Dorsolateral prefrontal cortex (tissue), 120 donors: ENCODE measurements at regions of chr4 and their contacts with region 1.

Region 1: GRCh38 chr4:185142912-185143595 is at the start of gene SLC25A4:
- DNase-seq: peak; percentile 82 to 96 (median 90)
- H3K4me3 ChIP-seq: peak within 1 kb of the TSS; percentile 64 to 96 (median 81)
- H3K27ac ChIP-seq: peak within 1 kb of the TSS; percentile 82 to 99 (median 96)
- H3K27me3 ChIP-seq: no peaks in the 10 kb centered on the region
- CTCF ChIP-seq: peak; percentile 12 to 77 (median 60)
- total RNA-seq, gene SLC25A4: 57.5 to 171 (median 125) TPM

Region 2: GRCh38 chr4:184649026-184649970 is 493.8 kb before region 1 on chr4 and contains the starts of genes CASP3 and PRIMPOL:
- intact Hi-C with region 1: loop called in 1 of 2 experiments (anchors 10 kb)
- DNase-seq: peak; percentile 93 to 99 (median 96)
- H3K4me3 ChIP-seq: peak within 1 kb of the TSS; percentile 60 to 97 (median 89)
- H3K27ac ChIP-seq: peak within 1 kb of the TSS; percentile 55 to 98 (median 94)
- H3K27me3 ChIP-seq: no peaks in the 10 kb centered on the region
- CTCF ChIP-seq: peak in 51 of 56 donors; percentile 14 to 67 (median 44)
- total RNA-seq, gene CASP3: 6.4 to 17.2 (median 12.2) TPM
- total RNA-seq, gene PRIMPOL: 9.5 to 30.5 (median 17.5) TPM

Region 3: DNA sequence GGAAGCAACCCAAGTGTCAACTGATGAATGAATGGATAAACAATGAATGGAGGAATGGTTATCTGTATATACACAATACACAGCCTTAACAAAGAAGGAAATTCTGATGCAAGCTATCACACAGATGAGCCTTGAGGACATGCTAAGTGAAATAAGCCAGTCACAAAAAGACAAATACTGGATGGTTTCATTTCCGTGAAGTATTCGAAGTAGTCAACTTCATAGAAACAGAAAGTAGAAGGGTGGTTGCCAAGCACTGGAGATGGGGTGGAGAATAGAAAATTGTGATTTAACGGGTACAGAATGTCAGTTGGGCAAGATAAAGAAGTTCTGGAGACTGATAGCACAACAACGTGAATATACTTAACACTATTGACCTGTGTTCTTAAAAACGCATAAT is 437.4 kb before region 1 on chr4:
- intact Hi-C with region 1: no loop called
- DNase-seq: no peak
- H3K4me3 ChIP-seq: no peak overlapping the region
- H3K27ac ChIP-seq: no peak overlapping the region
- H3K27me3 ChIP-seq: no peaks in the 10 kb centered on the region
- CTCF ChIP-seq: no peak

Region 4: DNA sequence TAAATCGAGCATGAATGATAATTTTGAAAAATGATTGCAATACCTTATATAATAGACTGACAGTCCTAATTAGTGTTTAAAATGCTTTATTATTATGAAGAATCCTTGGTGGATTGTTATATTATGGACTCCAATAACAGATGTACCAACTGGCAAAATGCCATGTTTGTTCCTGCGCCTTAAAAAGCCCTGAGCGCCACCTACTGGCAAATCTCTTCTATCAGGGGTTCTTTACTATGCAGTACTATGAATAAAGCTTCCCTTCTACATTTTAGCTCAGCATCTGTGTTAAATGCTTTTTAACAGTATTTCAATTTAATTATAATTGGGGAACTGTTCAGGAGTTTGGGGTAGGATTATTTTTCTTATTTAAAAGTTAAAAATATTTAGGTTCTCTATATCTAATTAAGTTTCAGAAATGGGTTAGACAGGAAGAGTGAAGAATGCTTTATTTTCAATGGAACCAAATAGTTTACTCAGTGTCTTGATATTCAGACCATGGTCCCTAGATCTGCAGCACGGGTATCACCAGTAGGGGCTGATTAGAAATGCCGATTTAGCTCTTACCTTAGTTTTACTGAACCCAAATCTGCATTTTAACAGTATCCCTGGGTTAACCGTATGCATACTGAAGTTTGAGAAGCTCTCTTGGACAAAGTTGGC is 40.7 kb after region 1 on chr4:
- intact Hi-C with region 1: loop called (anchors 2 to 5 kb)
- DNase-seq: peak; percentile 45 to 89 (median 74)
- H3K4me3 ChIP-seq: peak overlapping the region in 2 of 59 donors; percentile 8 to 19
- H3K27ac ChIP-seq: peak overlapping the region in 5 of 59 donors; percentile 2 to 22 (median 11)
- H3K27me3 ChIP-seq: no peaks in the 10 kb centered on the region
- CTCF ChIP-seq: peak; percentile 75 to 97 (median 90)

Region 5: GRCh38 chr4:185203486-185204237 is 60.6 kb after region 1 on chr4 and contains the start of gene CFAP97:
- intact Hi-C with region 1: loop called in 1 of 2 experiments (anchors 10 kb)
- DNase-seq: peak; percentile 81 to 92 (median 88)
- H3K4me3 ChIP-seq: peak within 1 kb of the TSS; percentile 62 to 94 (median 83)
- H3K27ac ChIP-seq: peak within 1 kb of the TSS; percentile 83 to 99 (median 95)
- H3K27me3 ChIP-seq: no peaks in the 10 kb centered on the region
- CTCF ChIP-seq: peak in 27 of 56 donors; percentile 3 to 60 (median 24)
- total RNA-seq, gene CFAP97: 16.8 to 37.2 (median 26.7) TPM

Region 6: GRCh38 chr4:185369731-185370130 is 226.7 kb after region 1 on chr4:
- intact Hi-C with region 1: no loop called
- DNase-seq: no peak
- H3K4me3 ChIP-seq: no peak overlapping the region
- H3K27ac ChIP-seq: no peak overlapping the region
- H3K27me3 ChIP-seq: no peaks in the 10 kb centered on the region
- CTCF ChIP-seq: no peak

Region 7: DNA sequence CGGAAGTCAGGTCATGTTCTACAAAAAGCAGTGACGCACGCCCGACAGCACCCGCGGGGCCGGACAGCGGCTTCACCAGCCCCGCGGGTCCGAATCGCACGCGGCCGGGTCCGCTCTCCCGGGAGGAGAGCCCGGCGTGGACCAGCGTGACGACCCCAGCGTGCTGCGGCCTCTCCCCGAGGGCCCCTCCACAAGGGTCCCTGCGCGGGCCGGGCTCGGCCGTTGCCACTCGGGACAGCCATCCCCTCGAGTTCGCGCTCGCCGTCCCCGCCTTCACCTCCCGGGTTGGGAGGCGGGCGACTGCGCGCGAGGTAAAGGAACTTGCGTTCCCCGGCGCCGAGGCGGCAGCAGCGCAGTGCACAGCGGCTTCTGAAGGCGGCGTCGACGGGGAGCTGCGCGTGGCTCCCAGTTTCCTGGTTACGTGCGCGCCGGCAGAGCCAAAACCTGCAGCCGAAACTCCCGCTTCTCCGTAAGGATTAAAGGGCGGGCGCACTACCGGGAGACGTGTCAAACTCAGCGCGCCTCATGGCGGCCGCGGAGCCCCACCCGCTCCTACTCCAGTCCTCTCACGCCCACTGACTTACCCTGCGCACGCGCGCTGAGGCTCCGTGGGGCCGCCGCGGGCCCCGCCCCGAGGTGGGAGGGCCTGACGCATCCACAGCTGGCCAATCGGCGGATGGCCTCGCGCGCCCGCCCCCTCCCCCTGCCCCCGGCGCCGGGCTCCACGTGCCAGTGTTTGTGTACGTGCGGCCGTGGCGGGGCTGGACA is 253.1 kb after region 1 on chr4:
- intact Hi-C with region 1: loop called (anchors 1 to 2 kb)
- DNase-seq: peak; percentile 96 to 99 (median 98)
- H3K4me3 ChIP-seq: peak overlapping the region; percentile 52 to 100 (median 87)
- H3K27ac ChIP-seq: peak overlapping the region; percentile 92 to 100 (median 100)
- H3K27me3 ChIP-seq: no peaks in the 10 kb centered on the region
- CTCF ChIP-seq: peak in 14 of 56 donors; percentile 5 to 28 (median 14)

Region 8: DNA sequence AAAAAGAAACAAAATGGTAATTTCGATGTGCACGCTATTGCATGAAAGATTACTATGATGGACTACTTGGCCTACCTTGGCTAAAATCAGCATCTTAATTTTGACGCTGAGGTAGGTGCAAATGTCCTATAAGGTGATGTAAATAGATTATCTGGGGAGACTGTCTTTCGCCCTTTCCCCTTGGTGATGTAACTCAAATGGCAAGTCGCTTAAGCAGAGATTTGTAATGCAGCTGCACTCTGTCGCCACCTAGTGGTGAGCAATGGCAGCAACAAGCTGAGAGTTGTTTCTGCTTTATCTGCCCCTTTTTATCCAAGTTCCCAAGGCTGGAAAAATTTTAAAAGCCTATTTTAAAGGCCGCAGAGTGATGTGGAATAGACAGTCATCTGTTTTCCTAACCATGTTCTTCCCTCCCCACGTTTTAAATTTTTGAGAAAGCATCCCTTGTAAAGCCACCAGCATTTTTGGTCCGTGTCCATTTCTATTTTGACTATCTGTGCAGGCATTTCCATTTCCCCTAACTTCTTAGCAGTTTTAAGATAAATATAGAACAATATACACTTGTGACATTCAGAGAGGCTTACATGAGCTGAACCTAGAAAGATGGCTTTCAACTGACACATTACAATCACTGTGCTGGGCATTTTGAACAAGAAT is 454.6 kb after region 1 on chr4:
- intact Hi-C with region 1: loop called in 1 of 2 experiments (anchors 5 kb)
- DNase-seq: peak in 9 of 10 donors; percentile 59 to 86 (median 76)
- H3K4me3 ChIP-seq: peak overlapping the region in 30 of 59 donors; percentile 0 to 57 (median 24)
- H3K27ac ChIP-seq: peak overlapping the region in 20 of 59 donors; percentile 2 to 66 (median 23)
- H3K27me3 ChIP-seq: no peaks in the 10 kb centered on the region
- CTCF ChIP-seq: peak; percentile 93 to 100 (median 99)